Mammary epithelial cell (primary cell): ENCODE measurements at regions of chr6 and their contacts with region 1.

Region 1: DNA sequence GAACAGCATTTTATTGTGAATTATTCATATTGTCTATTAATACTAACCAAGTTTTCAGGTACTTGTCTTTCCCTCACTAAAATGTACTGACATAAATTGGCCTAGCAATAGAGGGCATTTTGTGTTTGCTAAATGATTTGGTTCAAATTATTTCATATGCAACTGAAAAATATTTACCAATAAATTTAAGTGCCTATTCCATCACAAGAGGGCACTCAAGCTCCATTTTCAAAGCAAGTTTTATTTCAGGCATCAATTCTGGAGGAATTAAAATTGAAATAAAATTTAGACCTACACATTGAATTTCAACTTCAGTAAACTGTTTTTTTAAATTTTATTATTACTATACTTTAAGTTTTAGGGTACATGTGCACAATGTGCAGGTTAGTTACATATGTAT is 114.3 kb upstream of the SYNCRIP start:
- DNase-seq: no peak
- H3K4me3 ChIP-seq: no peak overlapping the region
- H3K27ac ChIP-seq: no peak overlapping the region
- H3K4me1 ChIP-seq: no peaks in the 10 kb centered on the region
- H3K27me3 ChIP-seq: no peaks in the 10 kb centered on the region
- CTCF ChIP-seq: peak; percentile 33 to 52

Region 2: DNA sequence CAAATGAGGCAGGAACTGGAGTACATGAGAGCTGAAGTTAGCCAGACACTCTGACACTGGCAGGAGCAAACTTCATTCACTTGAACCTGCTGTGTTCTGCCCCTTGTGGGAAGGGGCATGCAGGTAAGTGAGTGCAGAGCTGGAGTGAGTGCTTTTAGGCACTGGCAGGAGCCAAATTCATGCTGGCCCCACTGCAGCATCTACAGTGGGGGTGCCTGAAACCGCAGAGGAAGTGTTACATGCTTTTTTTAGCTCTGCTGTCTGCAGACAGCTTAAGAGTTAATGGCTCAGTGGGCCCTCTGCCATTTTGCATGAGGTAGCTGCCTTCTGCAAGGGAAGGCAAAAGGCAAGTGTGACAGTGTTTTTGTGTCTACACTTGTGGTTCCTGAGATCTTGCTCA is 53.6 kb after region 1 on chr6:
- CTCF ChIA-PET with region 1: no interaction called
- dilution Hi-C with region 1: no loop called
- in situ Hi-C with region 1: no loop called
- intact Hi-C with region 1: no loop called
- DNase-seq: no peak
- H3K4me3 ChIP-seq: no peak overlapping the region
- H3K27ac ChIP-seq: no peak overlapping the region
- H3K4me1 ChIP-seq: no peaks in the 10 kb centered on the region
- H3K27me3 ChIP-seq: no peaks in the 10 kb centered on the region
- CTCF ChIP-seq: no peak

Region 3: DNA sequence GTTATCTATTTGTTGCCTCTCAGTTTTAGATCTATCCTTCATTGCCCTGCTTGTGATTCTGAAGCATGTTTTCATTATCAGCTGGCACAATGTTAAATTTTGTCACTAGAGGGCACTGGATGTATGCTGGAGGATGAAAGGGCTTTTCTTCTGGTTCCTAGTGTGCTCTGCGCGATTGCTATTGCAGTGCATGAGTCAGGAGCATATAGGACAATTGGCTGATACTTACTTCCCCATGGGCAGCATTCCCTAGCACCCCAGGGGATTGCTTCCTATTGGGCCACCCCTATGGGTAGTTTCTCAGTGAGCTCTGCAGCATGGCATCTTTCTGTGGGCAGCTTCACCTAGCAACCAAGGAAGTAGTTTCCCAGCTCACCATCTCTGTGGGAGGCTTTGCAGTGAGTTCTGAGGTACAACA is 166.0 kb after region 1 on chr6:
- CTCF ChIA-PET with region 1: no interaction called
- dilution Hi-C with region 1: no loop called
- in situ Hi-C with region 1: no loop called
- intact Hi-C with region 1: loop called (anchors 2 kb)
- DNase-seq: peak; percentile 60
- H3K4me3 ChIP-seq: no peak overlapping the region
- H3K27ac ChIP-seq: no peak overlapping the region
- H3K4me1 ChIP-seq: no peaks in the 10 kb centered on the region
- H3K27me3 ChIP-seq: no peaks in the 10 kb centered on the region
- CTCF ChIP-seq: peak; percentile 58 to 82

Region 4: DNA sequence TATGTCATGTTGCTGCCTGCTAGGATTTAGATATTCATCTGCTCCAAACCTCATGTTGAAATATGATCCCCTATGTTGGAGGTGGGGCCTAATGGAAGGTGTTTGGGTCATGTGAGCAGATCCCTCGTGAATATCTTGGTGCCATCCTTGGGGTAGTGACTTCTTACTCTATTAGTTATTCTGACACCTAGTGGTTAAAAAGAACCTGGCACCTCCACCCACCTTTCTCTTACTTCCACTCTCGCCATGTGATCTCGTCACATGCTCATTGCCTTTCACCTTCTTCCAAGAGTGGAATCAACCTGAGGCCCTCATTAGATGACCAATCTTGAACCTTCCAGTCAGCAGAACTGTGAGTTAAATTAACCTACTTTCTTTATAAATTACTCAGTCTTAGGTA is 435.1 kb after region 1 on chr6:
- CTCF ChIA-PET with region 1: no interaction called
- dilution Hi-C with region 1: no loop called
- in situ Hi-C with region 1: no loop called
- intact Hi-C with region 1: loop called (anchors 5 kb)
- DNase-seq: peak; percentile 22
- H3K4me3 ChIP-seq: no peak overlapping the region
- H3K27ac ChIP-seq: no peak overlapping the region
- H3K4me1 ChIP-seq: no peaks in the 10 kb centered on the region
- H3K27me3 ChIP-seq: no peaks in the 10 kb centered on the region
- CTCF ChIP-seq: peak; percentile 10 to 27

Region 5: DNA sequence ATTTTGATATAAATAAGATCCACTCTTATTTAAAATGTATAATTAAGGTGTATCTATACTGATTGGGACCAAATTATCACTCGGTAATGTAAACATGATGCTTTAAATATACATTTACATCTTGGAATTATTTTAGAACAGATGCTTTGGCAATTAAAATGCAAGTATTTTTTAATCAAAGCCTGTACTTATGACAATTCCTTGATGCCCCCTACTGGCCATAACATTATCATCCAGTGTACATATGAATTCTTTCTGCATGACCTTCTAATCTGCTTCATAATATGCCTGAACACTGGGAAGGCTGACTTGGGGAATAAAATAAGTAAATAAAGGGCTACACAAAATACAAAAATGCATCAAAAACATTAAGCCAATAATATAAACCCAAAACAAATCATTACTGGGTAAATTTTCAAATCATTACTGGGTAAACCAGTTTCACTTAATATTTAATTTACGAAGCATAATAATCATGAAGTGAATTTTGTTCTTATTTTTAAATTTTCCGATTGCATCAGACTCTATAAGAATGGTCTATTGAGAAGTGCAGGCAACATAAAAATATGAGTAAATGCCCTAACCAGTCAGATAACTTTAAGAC is 1272.8 kb after region 1 on chr6:
- CTCF ChIA-PET with region 1: no interaction called
- dilution Hi-C with region 1: no loop called
- in situ Hi-C with region 1: no loop called
- intact Hi-C with region 1: loop called (anchors 5 kb)
- DNase-seq: peak; percentile 27
- H3K4me3 ChIP-seq: no peak overlapping the region
- H3K27ac ChIP-seq: no peak overlapping the region
- H3K4me1 ChIP-seq: no peaks in the 10 kb centered on the region
- H3K27me3 ChIP-seq: no peaks in the 10 kb centered on the region
- CTCF ChIP-seq: peak; percentile 64 to 71